Dorsolateral prefrontal cortex (tissue), 120 donors: ENCODE measurements at regions of chr17 and their contacts with region 1.

Region 1: GRCh38 chr17:67993596-67994361 is 2.5 kb downstream of the C17orf58 start:
- DNase-seq: peak; percentile 54 to 86 (median 76)
- H3K4me3 ChIP-seq: peak overlapping the region; percentile 47 to 93 (median 75)
- H3K27ac ChIP-seq: peak overlapping the region; percentile 70 to 99 (median 96)
- H3K27me3 ChIP-seq: no peaks in the 10 kb centered on the region
- CTCF ChIP-seq: no peak

Region 2: GRCh38 chr17:67829331-67829730 is 164.4 kb before region 1 on chr17:
- intact Hi-C with region 1: no loop called
- DNase-seq: no peak
- H3K4me3 ChIP-seq: peak overlapping the region in 30 of 59 donors; percentile 6 to 86 (median 71)
- H3K27ac ChIP-seq: peak overlapping the region in 1 of 59 donors; percentile 1
- H3K27me3 ChIP-seq: no peaks in the 10 kb centered on the region
- CTCF ChIP-seq: no peak

Region 3: GRCh38 chr17:67891581-67892054 is 102.2 kb before region 1 on chr17:
- intact Hi-C with region 1: no loop called
- DNase-seq: peak in 7 of 10 donors; percentile 19 to 56 (median 43)
- H3K4me3 ChIP-seq: no peak overlapping the region
- H3K27ac ChIP-seq: peak overlapping the region in 2 of 59 donors; percentile 2 to 10
- H3K27me3 ChIP-seq: no peaks in the 10 kb centered on the region
- CTCF ChIP-seq: peak in 50 of 56 donors; percentile 18 to 61 (median 42)

Region 4: DNA sequence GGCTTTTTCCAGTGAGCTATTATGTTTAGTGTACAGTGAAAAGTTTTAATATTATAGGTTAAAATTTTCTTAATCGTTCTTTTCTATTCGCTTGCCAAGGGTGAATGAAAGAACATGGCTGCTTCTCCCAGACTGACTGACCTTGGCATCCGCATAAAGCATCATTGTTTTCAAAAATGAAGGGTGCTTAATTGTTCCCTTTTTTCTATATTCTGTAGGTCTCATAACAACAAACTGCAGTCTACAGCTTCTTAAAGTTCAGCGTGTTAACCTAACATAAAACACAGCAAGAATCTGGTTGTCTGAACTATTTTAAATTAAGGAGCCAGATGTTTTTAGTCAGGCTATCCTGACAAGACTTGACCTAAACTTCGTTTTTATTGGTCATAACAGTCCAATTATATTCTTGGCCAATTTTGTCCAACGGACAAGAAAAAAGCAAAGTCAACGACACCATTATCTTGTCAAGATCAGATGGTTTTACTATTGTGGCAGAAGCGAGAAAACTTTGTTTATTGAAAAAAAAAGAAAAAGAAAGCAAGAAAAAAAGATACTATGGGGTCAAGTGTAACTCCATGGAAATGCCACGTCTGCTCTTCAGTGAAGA is 11.6 kb before region 1 on chr17:
- intact Hi-C with region 1: loop called in 1 of 2 experiments (anchors 1 kb)
- DNase-seq: no peak
- H3K4me3 ChIP-seq: peak overlapping the region in 21 of 59 donors; percentile 1 to 51 (median 26)
- H3K27ac ChIP-seq: peak overlapping the region in 57 of 59 donors; percentile 0 to 91 (median 76)
- H3K27me3 ChIP-seq: no peaks in the 10 kb centered on the region
- CTCF ChIP-seq: no peak

Region 5: GRCh38 chr17:68019675-68020408 is 26.1 kb after region 1 on chr17:
- intact Hi-C with region 1: loop called (anchors 1 to 2 kb)
- DNase-seq: peak; percentile 93 to 98 (median 96)
- H3K4me3 ChIP-seq: peak overlapping the region; percentile 42 to 98 (median 78)
- H3K27ac ChIP-seq: peak overlapping the region; percentile 59 to 98 (median 93)
- H3K27me3 ChIP-seq: no peaks in the 10 kb centered on the region
- CTCF ChIP-seq: peak in 53 of 56 donors; percentile 1 to 73 (median 50)

Region 6: DNA sequence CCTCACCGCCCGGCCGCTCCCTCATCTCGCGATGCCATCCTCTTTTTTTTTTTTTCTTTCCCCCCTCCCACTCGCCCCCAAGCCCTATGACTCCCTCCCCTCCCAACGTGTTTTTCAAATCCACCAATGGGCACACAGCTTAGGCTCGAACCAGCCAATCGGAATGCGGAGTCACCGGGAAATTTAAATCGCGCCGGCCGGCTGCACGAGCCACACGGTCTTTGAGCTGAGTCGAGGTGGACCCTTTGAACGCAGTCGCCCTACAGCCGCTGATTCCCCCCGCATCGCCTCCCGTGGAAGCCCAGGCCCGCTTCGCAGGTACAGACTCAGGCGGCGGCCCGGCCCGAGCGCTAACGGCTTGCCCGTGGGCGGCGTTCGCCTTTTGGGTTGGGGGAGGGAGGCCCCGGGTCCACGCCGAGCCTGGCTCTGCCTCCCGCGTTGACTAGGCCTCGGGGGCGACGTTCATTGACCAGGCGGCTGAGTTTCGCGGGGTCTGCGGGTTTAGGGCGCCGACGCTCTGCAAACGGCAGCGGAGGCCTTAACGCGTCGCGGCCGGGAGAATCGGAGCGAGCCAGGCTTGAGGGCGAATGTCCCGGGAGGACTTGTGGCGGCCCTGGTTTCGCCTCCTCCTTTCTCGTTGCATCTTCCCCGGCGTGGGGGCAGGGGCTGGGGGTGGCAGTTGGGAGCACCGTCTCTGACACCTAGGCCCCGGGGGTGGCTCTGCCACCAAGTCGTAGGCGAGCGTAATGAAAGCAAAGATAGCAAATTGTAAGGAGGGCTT is 41.9 kb after region 1 on chr17 and contains the start of gene KPNA2:
- intact Hi-C with region 1: loop called (anchors 2 to 5 kb)
- DNase-seq: peak; percentile 76 to 94 (median 90)
- H3K4me3 ChIP-seq: peak within 1 kb of the TSS; percentile 50 to 100 (median 96)
- H3K27ac ChIP-seq: peak within 1 kb of the TSS; percentile 29 to 93 (median 80)
- H3K27me3 ChIP-seq: no peaks in the 10 kb centered on the region
- CTCF ChIP-seq: peak in 21 of 56 donors; percentile 1 to 44 (median 16)
- total RNA-seq, gene KPNA2: 17.2 to 55.8 (median 35.5) TPM

Region 7: GRCh38 chr17:68205251-68205807 is 211.6 kb after region 1 on chr17:
- intact Hi-C with region 1: loop called in 1 of 2 experiments (anchors 5 kb)
- DNase-seq: peak; percentile 87 to 96 (median 94)
- H3K4me3 ChIP-seq: peak overlapping the region; percentile 48 to 91 (median 75)
- H3K27ac ChIP-seq: peak overlapping the region in 58 of 59 donors; percentile 55 to 96 (median 91)
- H3K27me3 ChIP-seq: peaks cover 0 to 8% (median 0%) of the 10 kb centered on the region in 45 donors
- CTCF ChIP-seq: peak; percentile 71 to 98 (median 90)